Posterior cingulate gyrus (tissue), 11 donors: ENCODE measurements at regions of chr6 and their contacts with region 1.

Region 1: DNA sequence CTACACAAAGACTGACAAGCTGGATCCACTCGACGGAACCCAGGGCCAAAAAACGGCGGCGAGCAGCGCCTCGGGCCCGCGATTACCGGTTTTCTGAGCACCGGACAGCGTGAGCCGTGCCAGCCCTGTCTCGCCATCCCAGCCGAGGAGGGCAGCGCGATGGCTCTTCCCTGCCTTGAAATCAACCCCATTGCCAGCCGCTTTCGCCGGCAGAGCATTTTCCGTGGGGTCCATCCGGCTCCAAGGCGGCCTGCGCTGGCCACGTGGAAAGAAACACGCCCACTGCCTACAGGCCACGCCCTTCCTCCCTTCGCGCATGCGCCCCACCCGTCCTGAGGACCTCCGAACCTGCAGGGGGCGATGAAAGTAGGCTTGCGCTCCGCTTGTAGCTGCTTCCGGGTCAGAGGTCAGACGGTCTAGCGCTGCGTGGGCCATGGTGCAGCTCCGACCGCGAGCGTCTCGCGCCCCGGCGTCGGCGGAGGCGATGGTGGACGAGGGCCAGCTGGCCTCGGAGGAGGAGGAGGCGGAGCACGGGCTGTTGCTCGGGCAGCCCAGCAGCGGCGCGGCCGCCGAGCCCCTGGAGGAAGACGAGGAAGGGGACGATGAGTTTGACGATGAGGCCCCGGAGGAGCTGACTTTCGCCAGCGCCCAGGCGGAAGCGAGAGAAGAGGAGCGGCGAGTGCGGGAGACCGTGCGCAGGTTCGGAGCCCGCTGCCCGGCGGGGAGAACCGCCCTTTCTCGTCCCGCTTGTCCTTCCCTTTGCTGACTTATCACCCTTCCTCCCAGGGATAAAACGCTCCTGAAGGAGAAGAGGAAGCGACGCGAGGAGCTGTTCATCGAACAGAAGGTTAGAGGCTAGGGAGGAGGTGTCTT is at the start of gene NOL7:
- DNase-seq: peak; percentile 95 to 99 (median 97)

Region 2: GRCh38 chr6:13574149-13574570 is 41.0 kb before region 1 on chr6:
- intact Hi-C with region 1: loop called (anchors 2 kb)
- DNase-seq: peak; percentile 78 to 98 (median 85)

Region 3: GRCh38 chr6:13630499-13630898 is 15.3 kb after region 1 on chr6:
- intact Hi-C with region 1: no loop called
- DNase-seq: no peak

Region 4: GRCh38 chr6:13711733-13712598 is 96.8 kb after region 1 on chr6 and contains the start of gene RANBP9:
- intact Hi-C with region 1: loop called (anchors 1 kb)
- DNase-seq: peak; percentile 70 to 97 (median 84)

Region 5: GRCh38 chr6:14066782-14067406 is 451.7 kb after region 1 on chr6:
- intact Hi-C with region 1: loop called (anchors 10 kb)
- DNase-seq: no peak